Activated naive CD4-positive, alpha-beta T cell treated with anti-CD3 and anti-CD28 coated beads for 36 hours (primary cell): ENCODE measurements at regions of chr2 and their contacts with region 1.

Region 1: GRCh38 chr2:227774011-227774624 is 28.4 kb downstream of the SCYGR8 start:
- DNase-seq: peak; percentile 14
- H3K4me3 Mint-ChIP-seq: no peak overlapping the region
- H3K27ac Mint-ChIP-seq: peak overlapping the region; percentile 67
- H3K4me1 Mint-ChIP-seq: peaks cover 17% of the 10 kb centered on the region
- H3K27me3 Mint-ChIP-seq: no peaks in the 10 kb centered on the region

Region 2: DNA sequence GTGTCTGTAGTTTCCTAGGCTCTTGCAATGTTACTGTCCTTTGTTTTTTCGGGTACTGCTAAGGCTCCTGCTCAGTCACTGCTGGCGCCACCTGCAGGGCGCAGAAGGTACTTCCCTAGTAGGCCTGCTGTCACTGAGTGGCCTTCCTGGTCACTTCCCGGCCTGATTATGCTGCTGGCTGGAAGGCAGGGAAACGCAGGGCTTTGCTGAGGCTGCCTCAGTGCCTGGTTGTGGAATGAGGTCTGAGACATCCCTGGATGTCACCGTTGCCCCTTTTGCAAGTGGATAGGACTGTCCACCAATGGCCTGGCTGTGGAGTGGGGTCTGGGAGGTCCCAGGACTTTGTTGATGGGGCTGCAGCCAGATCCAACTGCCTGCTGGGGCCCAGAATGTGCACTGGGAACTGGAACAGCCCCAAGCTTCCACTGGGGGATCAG is 110.4 kb after region 1 on chr2:
- CTCF ChIA-PET with region 1: no interaction called
- intact Hi-C with region 1: loop called (anchors 1 kb)
- DNase-seq: peak; percentile 69
- H3K4me3 Mint-ChIP-seq: no peak overlapping the region
- H3K27ac Mint-ChIP-seq: no peak overlapping the region
- H3K4me1 Mint-ChIP-seq: peaks cover 2% of the 10 kb centered on the region
- H3K27me3 Mint-ChIP-seq: no peaks in the 10 kb centered on the region

Region 3: GRCh38 chr2:228303946-228304345 is 529.8 kb after region 1 on chr2:
- CTCF ChIA-PET with region 1: no interaction called
- intact Hi-C with region 1: no loop called
- DNase-seq: no peak
- H3K4me3 Mint-ChIP-seq: no peak overlapping the region
- H3K27ac Mint-ChIP-seq: no peak overlapping the region
- H3K4me1 Mint-ChIP-seq: no peaks in the 10 kb centered on the region
- H3K27me3 Mint-ChIP-seq: no peaks in the 10 kb centered on the region

Region 4: DNA sequence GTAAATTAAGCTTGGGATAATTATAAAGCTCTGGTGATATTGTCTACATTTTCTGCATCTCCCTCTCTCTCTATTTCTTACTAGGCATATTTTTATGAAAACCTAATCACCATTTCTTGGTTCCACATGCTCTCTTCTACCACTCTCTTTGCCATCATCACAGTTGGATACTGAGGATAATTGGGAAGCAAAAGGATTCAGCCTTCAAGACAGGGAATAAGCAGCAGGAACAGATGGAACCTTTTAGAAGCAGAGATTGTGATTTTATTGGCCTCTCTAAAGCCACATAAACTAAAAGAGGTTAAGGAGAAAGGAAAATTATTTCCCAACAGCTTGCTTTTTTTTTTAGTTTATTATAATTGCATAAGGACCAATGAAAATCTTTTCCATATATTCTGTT is 633.7 kb after region 1 on chr2:
- CTCF ChIA-PET with region 1: no interaction called
- intact Hi-C with region 1: no loop called
- DNase-seq: no peak
- H3K4me3 Mint-ChIP-seq: no peak overlapping the region
- H3K27ac Mint-ChIP-seq: no peak overlapping the region
- H3K4me1 Mint-ChIP-seq: no peaks in the 10 kb centered on the region
- H3K27me3 Mint-ChIP-seq: no peaks in the 10 kb centered on the region